Naive thymus-derived CD4-positive, alpha-beta T cell (primary cell): ENCODE measurements at regions of chr18 and their contacts with region 1.

Region 1: DNA sequence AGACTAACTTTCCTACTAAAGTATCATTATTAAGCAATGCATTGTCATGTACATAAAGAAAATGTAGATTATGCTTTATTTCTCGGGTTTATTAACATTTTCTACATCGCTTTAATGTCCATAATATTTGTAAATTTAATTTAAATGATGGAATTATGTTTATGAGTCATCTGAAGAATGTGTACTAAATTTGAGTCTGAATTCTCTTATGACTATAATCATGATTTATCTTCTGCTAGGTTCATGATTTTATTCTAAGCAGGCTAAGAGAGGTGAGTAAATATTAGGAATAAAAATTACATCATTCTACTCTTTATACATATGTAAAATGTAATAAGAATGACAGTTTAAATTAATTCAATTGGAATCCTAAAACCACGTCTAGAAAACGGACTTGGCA is 206.3 kb upstream of the NOL4 start:
- DNase-seq: no peak
- ATAC-seq: no peak
- H3K4me3 ChIP-seq: no peak overlapping the region
- H3K4me3 Mint-ChIP-seq: no peak overlapping the region
- H3K27ac ChIP-seq: no peak overlapping the region
- H3K27ac Mint-ChIP-seq: no peak overlapping the region
- H3K4me1 ChIP-seq: no peaks in the 10 kb centered on the region
- H3K4me1 Mint-ChIP-seq: no peaks in the 10 kb centered on the region
- H3K27me3 ChIP-seq: no peaks in the 10 kb centered on the region
- H3K27me3 Mint-ChIP-seq: no peaks in the 10 kb centered on the region

Region 2: GRCh38 chr18:34483198-34483597 is 52.2 kb after region 1 on chr18:
- CTCF ChIA-PET with region 1: no interaction called
- POLR2A ChIA-PET with region 1: no interaction called
- intact Hi-C with region 1: loop called in 1 of 2 experiments (anchors 10 kb)
- DNase-seq: no peak
- ATAC-seq: no peak
- H3K4me3 ChIP-seq: no peak overlapping the region
- H3K4me3 Mint-ChIP-seq: no peak overlapping the region
- H3K27ac ChIP-seq: no peak overlapping the region
- H3K27ac Mint-ChIP-seq: no peak overlapping the region
- H3K4me1 ChIP-seq: no peaks in the 10 kb centered on the region
- H3K4me1 Mint-ChIP-seq: no peaks in the 10 kb centered on the region
- H3K27me3 ChIP-seq: no peaks in the 10 kb centered on the region
- H3K27me3 Mint-ChIP-seq: no peaks in the 10 kb centered on the region